Mammary epithelial cell (primary cell): ENCODE measurements at regions of chr2 and their contacts with region 1.

Region 1: GRCh38 chr2:55111570-55112228 is 61.4 kb upstream of the RTN4 start:
- DNase-seq: no peak
- H3K4me3 ChIP-seq: no peak overlapping the region
- H3K27ac ChIP-seq: no peak overlapping the region
- H3K4me1 ChIP-seq: peaks cover 9% of the 10 kb centered on the region
- H3K27me3 ChIP-seq: no peaks in the 10 kb centered on the region
- CTCF ChIP-seq: no peak

Region 2: DNA sequence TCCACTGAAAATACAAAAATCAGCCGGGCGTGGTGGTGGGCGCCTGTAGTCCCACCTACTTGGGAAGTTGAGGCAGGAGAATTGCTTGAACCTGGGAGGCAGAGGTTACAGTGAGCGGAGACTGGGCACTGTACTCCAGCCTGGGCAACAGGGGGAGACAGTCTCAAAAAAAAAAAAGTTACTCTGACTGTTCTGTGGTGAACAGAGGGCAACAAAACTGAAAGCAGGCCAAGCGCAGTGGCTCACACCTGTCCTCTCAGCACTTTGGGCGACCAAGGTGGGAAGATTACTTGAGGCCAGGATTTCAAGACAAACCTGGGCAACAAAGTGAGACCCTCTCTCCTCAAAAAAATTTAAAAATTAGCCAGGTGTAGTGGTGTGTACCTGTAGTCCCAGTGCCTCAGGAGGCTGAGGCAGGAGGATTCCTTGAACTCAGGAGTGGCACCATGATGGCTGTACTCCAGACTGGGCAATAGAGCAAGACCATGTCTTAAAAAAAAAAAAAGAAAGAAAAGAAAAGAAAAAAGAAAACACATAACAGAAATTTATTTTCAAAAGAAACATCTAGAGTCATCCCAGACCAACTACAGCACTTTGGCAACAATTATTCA is 47.9 kb before region 1 on chr2:
- CTCF ChIA-PET with region 1: no interaction called
- dilution Hi-C with region 1: loop called (anchors 5 kb)
- in situ Hi-C with region 1: no loop called
- intact Hi-C with region 1: no loop called
- DNase-seq: no peak
- H3K4me3 ChIP-seq: no peak overlapping the region
- H3K27ac ChIP-seq: no peak overlapping the region
- H3K4me1 ChIP-seq: no peaks in the 10 kb centered on the region
- H3K27me3 ChIP-seq: no peaks in the 10 kb centered on the region
- CTCF ChIP-seq: no peak

Region 3: GRCh38 chr2:55093381-55093780 is 18.3 kb before region 1 on chr2:
- CTCF ChIA-PET with region 1: no interaction called
- dilution Hi-C with region 1: no loop called
- in situ Hi-C with region 1: no loop called
- intact Hi-C with region 1: no loop called
- DNase-seq: peak; percentile 72
- H3K4me3 ChIP-seq: no peak overlapping the region
- H3K27ac ChIP-seq: no peak overlapping the region
- H3K4me1 ChIP-seq: peaks cover 6% of the 10 kb centered on the region
- H3K27me3 ChIP-seq: no peaks in the 10 kb centered on the region
- CTCF ChIP-seq: no peak

Region 4: GRCh38 chr2:56410140-56410539 is 1298.4 kb after region 1 on chr2:
- CTCF ChIA-PET with region 1: no interaction called
- dilution Hi-C with region 1: no loop called
- in situ Hi-C with region 1: no loop called
- intact Hi-C with region 1: no loop called
- DNase-seq: peak; percentile 1
- H3K4me3 ChIP-seq: no peak overlapping the region
- H3K27ac ChIP-seq: no peak overlapping the region
- H3K4me1 ChIP-seq: no peaks in the 10 kb centered on the region
- H3K27me3 ChIP-seq: no peaks in the 10 kb centered on the region
- CTCF ChIP-seq: no peak